ENCODE measurements at regions of chr3 and their contacts with region 1.

Region 1: GRCh38 chr3:66822186-66823008 is 175.7 kb upstream of the KBTBD8 start:
- DNase-seq: peak; percentile 81
- H3K4me3 Mint-ChIP-seq: no peak overlapping the region
- H3K27ac Mint-ChIP-seq: no peak overlapping the region
- H3K4me1 Mint-ChIP-seq: no peaks in the 10 kb centered on the region
- H3K27me3 Mint-ChIP-seq: peaks cover 11% of the 10 kb centered on the region
- CTCF ChIP-seq: peak; percentile 66

Region 2: GRCh38 chr3:66248641-66249040 is 573.8 kb before region 1 on chr3:
- CTCF ChIA-PET with region 1: interaction called, 74 read pairs
- POLR2A ChIA-PET with region 1: no interaction called
- intact Hi-C with region 1: no loop called
- DNase-seq: no peak
- H3K4me3 Mint-ChIP-seq: no peak overlapping the region
- H3K27ac Mint-ChIP-seq: no peak overlapping the region
- H3K4me1 Mint-ChIP-seq: no peaks in the 10 kb centered on the region
- H3K27me3 Mint-ChIP-seq: no peaks in the 10 kb centered on the region
- CTCF ChIP-seq: no peak

Region 3: DNA sequence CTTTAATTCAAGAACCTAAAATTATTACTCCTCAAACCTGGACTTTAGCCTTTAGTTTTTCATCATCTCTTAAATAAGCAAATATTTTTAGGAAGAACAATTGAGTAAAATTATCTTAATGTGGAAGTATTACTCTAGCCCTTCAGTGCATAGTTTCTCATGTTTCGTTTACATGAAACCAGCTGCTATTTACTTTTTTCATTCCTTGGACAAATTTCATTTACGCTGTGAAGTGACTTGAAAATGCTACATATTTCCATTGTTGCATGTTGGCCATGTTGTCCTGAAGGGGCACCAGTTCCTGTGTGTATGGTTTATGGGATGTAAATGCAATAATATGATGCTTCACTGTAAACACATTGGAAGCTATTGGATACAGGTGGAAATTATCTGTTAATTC is 551.7 kb before region 1 on chr3:
- CTCF ChIA-PET with region 1: interaction called, 10 read pairs
- POLR2A ChIA-PET with region 1: interaction called, 3 read pairs
- intact Hi-C with region 1: no loop called
- DNase-seq: no peak
- H3K4me3 Mint-ChIP-seq: no peak overlapping the region
- H3K27ac Mint-ChIP-seq: no peak overlapping the region
- H3K4me1 Mint-ChIP-seq: no peaks in the 10 kb centered on the region
- H3K27me3 Mint-ChIP-seq: no peaks in the 10 kb centered on the region
- CTCF ChIP-seq: no peak

Region 4: GRCh38 chr3:66418475-66418931 is 403.9 kb before region 1 on chr3:
- CTCF ChIA-PET with region 1: interaction called, 604 read pairs
- POLR2A ChIA-PET with region 1: no interaction called
- intact Hi-C with region 1: no loop called
- DNase-seq: no peak
- H3K4me3 Mint-ChIP-seq: no peak overlapping the region
- H3K27ac Mint-ChIP-seq: no peak overlapping the region
- H3K4me1 Mint-ChIP-seq: peaks cover 5% of the 10 kb centered on the region
- H3K27me3 Mint-ChIP-seq: no peaks in the 10 kb centered on the region
- CTCF ChIP-seq: no peak

Region 5: GRCh38 chr3:66809595-66809958 is 12.8 kb before region 1 on chr3:
- CTCF ChIA-PET with region 1: interaction called, 26 read pairs
- POLR2A ChIA-PET with region 1: interaction called, 4 read pairs
- intact Hi-C with region 1: no loop called
- DNase-seq: no peak
- H3K4me3 Mint-ChIP-seq: no peak overlapping the region
- H3K27ac Mint-ChIP-seq: no peak overlapping the region
- H3K4me1 Mint-ChIP-seq: peaks cover 7% of the 10 kb centered on the region
- H3K27me3 Mint-ChIP-seq: no peaks in the 10 kb centered on the region
- CTCF ChIP-seq: no peak

Measured in MCF 10A (cell line).